Activated naive CD4-positive, alpha-beta T cell treated with anti-CD3 and anti-CD28 coated beads, Interleukin-2, amount 10 ng/mL, durations not matched to agents 7 days and 5 days (primary cell): ENCODE measurements at regions of chr2 and their contacts with region 1.

Region 1: DNA sequence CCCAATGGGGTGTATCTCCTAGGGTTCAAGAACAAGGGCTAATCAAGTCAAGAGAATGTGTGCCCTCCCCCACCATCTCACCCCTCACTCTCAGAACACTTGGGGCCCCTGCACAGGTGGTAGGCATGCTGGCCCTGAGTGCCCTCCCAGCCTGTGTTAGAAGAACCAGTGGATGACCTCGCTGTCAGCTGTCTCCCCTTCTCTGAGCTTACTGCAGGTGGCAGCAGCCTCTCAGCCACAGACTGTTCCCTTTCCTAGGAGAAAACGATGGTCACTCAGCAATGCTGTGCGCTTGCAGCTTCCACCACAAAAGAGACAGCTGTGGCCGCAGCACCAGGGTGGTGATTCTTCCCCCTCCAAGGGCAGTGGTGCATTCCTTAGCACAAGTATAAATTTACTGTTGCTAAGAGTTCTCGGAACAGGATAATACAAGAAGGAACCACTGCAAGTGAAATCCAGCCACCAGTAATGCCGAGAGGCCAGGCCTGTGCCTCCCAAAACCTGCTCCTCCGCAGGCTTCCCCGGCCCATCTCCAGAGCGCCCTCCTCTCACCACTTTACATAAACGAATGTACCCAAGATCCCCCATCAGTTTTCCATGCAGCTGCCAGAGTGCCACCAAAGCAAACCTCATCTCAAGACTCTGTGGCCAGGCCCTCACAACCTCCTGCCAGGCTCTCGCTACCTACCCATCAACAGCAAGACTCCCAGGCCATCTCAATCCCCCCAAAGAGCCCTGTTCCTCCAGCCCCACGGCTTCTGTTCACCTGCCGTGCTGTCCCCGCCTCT is 935 bp upstream of the RAMP1 start:
- DNase-seq: peak; percentile 73
- H3K4me3 Mint-ChIP-seq: peak overlapping the region; percentile 72
- H3K27ac Mint-ChIP-seq: no peak overlapping the region
- H3K4me1 Mint-ChIP-seq: peaks cover 26% of the 10 kb centered on the region
- H3K27me3 Mint-ChIP-seq: peaks cover 63% of the 10 kb centered on the region

Region 2: GRCh38 chr2:237841051-237841450 is 17.4 kb before region 1 on chr2:
- CTCF ChIA-PET with region 1: no interaction called
- DNase-seq: no peak
- H3K4me3 Mint-ChIP-seq: no peak overlapping the region
- H3K27ac Mint-ChIP-seq: no peak overlapping the region
- H3K4me1 Mint-ChIP-seq: no peaks in the 10 kb centered on the region
- H3K27me3 Mint-ChIP-seq: peaks cover 11% of the 10 kb centered on the region

Region 3: GRCh38 chr2:237968121-237968862 is 109.8 kb after region 1 on chr2:
- CTCF ChIA-PET with region 1: interaction called, 12 read pairs
- DNase-seq: peak; percentile 77
- H3K4me3 Mint-ChIP-seq: peak overlapping the region; percentile 73
- H3K27ac Mint-ChIP-seq: peak overlapping the region; percentile 65
- H3K4me1 Mint-ChIP-seq: peaks cover 41% of the 10 kb centered on the region
- H3K27me3 Mint-ChIP-seq: no peaks in the 10 kb centered on the region